Endothelial cell of umbilical vein (primary cell): ENCODE measurements at regions of chr11 and their contacts with region 1.

Region 1: GRCh38 chr11:16738193-16738946 is at the start of gene C11orf58:
- DNase-seq: peak; percentile 99
- H3K4me3 ChIP-seq: peak within 1 kb of the TSS; percentile 80 to 94 (median 87)
- H3K27ac ChIP-seq: peak within 1 kb of the TSS; percentile 98
- H3K4me1 ChIP-seq: peaks cover 18% of the 10 kb centered on the region
- H3K27me3 ChIP-seq: no peaks in the 10 kb centered on the region
- CTCF ChIP-seq: no peak
- POLR2A ChIP-seq: peak; percentile 92
- total RNA-seq, gene C11orf58: 131 and 150 TPM in 2 replicates

Region 2: DNA sequence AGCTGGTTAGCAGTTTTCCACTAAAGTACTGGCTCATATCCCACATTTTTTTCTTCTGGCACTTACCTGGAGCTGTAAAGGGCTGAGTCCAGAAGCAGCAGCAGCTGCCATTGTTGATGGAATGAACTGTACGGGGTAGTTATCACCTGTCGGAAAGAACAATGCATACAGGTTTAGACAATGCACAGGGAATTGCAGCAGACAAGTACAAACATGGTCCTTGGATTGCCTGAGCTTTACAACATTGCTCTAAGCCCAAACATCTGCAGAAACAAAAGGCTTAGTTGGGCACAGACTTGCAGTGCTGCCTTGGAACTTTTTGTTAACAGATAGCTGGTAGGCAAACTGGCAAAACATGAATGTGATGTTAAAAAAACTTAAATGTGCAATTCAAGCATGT is 640.8 kb before region 1 on chr11:
- CTCF ChIA-PET with region 1: no interaction called
- POLR2A ChIA-PET with region 1: no interaction called
- dilution Hi-C with region 1: no loop called
- intact Hi-C with region 1: no loop called
- DNase-seq: no peak
- H3K4me3 ChIP-seq: no peak overlapping the region
- H3K27ac ChIP-seq: no peak overlapping the region
- H3K4me1 ChIP-seq: no peaks in the 10 kb centered on the region
- H3K27me3 ChIP-seq: no peaks in the 10 kb centered on the region
- CTCF ChIP-seq: no peak
- POLR2A ChIP-seq: no peak

Region 3: DNA sequence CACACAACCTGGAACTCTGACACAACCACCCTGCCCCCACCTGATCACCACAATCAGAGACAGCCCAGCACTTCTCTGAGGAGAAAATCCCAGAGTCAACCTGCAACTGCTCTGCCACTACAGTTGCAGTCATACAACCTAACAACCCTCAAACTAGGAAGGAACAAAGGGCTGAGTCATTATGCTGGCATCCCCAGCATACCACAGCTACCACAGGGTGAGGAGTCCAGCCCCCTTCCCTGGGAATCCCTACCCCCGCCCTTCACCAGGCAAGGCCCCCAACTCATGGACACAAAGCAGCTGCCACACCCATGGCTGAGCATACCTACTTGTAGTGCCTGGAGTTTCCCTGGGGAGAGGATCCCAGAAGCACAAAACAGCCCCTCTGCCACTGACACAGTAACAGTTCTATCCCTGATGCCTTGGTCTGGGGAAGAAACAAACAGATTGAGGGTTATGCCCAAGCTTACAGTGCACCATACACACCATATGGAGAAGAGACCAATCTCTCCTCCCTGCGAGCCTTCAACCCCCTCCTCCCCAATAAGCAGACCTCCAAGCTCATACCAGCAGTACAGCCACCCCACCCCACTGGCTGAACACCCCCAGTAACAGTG is 68.5 kb before region 1 on chr11:
- CTCF ChIA-PET with region 1: no interaction called
- POLR2A ChIA-PET with region 1: no interaction called
- dilution Hi-C with region 1: no loop called
- intact Hi-C with region 1: no loop called
- DNase-seq: no peak
- H3K4me3 ChIP-seq: no peak overlapping the region
- H3K27ac ChIP-seq: no peak overlapping the region
- H3K4me1 ChIP-seq: no peaks in the 10 kb centered on the region
- H3K27me3 ChIP-seq: no peaks in the 10 kb centered on the region
- CTCF ChIP-seq: no peak
- POLR2A ChIP-seq: no peak

Region 4: DNA sequence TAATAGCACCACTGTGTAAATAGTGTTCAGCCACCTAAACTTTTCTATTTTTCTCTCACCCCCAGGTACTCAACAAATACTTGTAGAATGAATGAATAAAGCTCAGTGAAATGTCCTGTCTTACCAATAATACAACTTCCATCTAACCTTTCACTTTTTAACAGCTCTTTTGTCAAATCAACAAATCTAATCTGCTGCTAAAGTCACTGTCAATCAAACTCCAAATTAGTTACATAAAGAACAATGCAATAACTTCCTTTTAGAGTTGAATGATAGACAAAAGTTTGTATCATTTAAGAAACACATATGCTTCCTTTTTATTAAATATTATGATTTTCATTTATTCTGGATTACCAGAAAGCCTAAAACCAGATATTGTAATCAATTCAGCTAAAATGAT is 34.6 kb before region 1 on chr11:
- CTCF ChIA-PET with region 1: no interaction called
- POLR2A ChIA-PET with region 1: no interaction called
- dilution Hi-C with region 1: no loop called
- intact Hi-C with region 1: no loop called
- DNase-seq: no peak
- H3K4me3 ChIP-seq: no peak overlapping the region
- H3K27ac ChIP-seq: no peak overlapping the region
- H3K4me1 ChIP-seq: no peaks in the 10 kb centered on the region
- H3K27me3 ChIP-seq: peaks cover 0 to 11% of the 10 kb centered on the region in 2 experiments
- CTCF ChIP-seq: no peak
- POLR2A ChIP-seq: no peak

Region 5: GRCh38 chr11:16759857-16760256 is 21.5 kb after region 1 on chr11:
- CTCF ChIA-PET with region 1: no interaction called
- POLR2A ChIA-PET with region 1: no interaction called
- dilution Hi-C with region 1: no loop called
- intact Hi-C with region 1: loop called (anchors 1 kb)
- DNase-seq: peak; percentile 75
- H3K4me3 ChIP-seq: no peak overlapping the region
- H3K27ac ChIP-seq: peak overlapping the region; percentile 89
- H3K4me1 ChIP-seq: peaks cover 14% of the 10 kb centered on the region
- H3K27me3 ChIP-seq: no peaks in the 10 kb centered on the region
- CTCF ChIP-seq: no peak
- POLR2A ChIP-seq: no peak

Region 6: GRCh38 chr11:16820324-16821092 is 82.1 kb after region 1 on chr11:
- CTCF ChIA-PET with region 1: no interaction called
- POLR2A ChIA-PET with region 1: no interaction called
- dilution Hi-C with region 1: no loop called
- intact Hi-C with region 1: no loop called
- DNase-seq: peak; percentile 74
- H3K4me3 ChIP-seq: no peak overlapping the region
- H3K27ac ChIP-seq: no peak overlapping the region
- H3K4me1 ChIP-seq: no peaks in the 10 kb centered on the region
- H3K27me3 ChIP-seq: no peaks in the 10 kb centered on the region
- CTCF ChIP-seq: peak; percentile 77 to 93
- POLR2A ChIP-seq: no peak